Ovary (tissue), 10 donors: ENCODE measurements at regions of chr5 and their contacts with region 1.

Region 1: GRCh38 chr5:63655043-63655442 is 307.2 kb downstream of the HTR1A start:
- DNase-seq: no peak
- H3K4me3 ChIP-seq: no peak overlapping the region
- H3K27ac ChIP-seq: no peak overlapping the region
- H3K4me1 ChIP-seq: no peaks in the 10 kb centered on the region
- H3K27me3 ChIP-seq: no peaks in the 10 kb centered on the region
- CTCF ChIP-seq: no peak
- EP300 ChIP-seq: no peak
- POLR2A ChIP-seq: no peak

Region 2: GRCh38 chr5:62762503-62762902 is 892.5 kb before region 1 on chr5:
- intact Hi-C with region 1: loop called in 1 of 4 experiments (anchors 10 kb)
- DNase-seq: no peak
- H3K4me3 ChIP-seq: no peak overlapping the region
- H3K27ac ChIP-seq: no peak overlapping the region
- H3K4me1 ChIP-seq: no peaks in the 10 kb centered on the region
- H3K27me3 ChIP-seq: no peaks in the 10 kb centered on the region
- CTCF ChIP-seq: no peak
- EP300 ChIP-seq: no peak
- POLR2A ChIP-seq: no peak

Region 3: GRCh38 chr5:63686938-63687337 is 31.9 kb after region 1 on chr5:
- intact Hi-C with region 1: no loop called
- DNase-seq: peak in 2 of 5 donors; percentile 13 to 16
- H3K4me3 ChIP-seq: no peak overlapping the region
- H3K27ac ChIP-seq: no peak overlapping the region
- H3K4me1 ChIP-seq: peaks cover 3% of the 10 kb centered on the region
- H3K27me3 ChIP-seq: no peaks in the 10 kb centered on the region
- CTCF ChIP-seq: no peak
- EP300 ChIP-seq: no peak
- POLR2A ChIP-seq: no peak

Region 4: DNA sequence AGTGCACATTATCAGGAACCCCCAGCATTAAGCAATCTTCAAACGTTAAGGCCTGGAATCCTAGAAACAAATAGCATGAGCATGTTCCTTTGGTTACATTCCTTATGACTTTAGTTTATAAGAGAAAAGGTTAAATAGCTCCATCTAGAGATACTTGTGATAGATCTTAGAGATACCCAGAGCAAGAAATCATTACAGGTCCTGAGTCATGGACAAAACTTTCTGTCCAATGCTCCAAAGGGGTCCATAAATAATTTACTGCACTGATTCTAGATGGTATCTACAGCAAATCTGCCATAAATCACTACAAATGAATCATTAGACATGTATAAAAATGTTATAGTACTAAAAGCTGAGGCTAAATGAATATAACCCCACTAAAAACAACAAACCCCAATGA is 167.6 kb after region 1 on chr5:
- intact Hi-C with region 1: no loop called
- DNase-seq: no peak
- H3K4me3 ChIP-seq: no peak overlapping the region
- H3K27ac ChIP-seq: no peak overlapping the region
- H3K4me1 ChIP-seq: peaks cover 2% of the 10 kb centered on the region
- H3K27me3 ChIP-seq: no peaks in the 10 kb centered on the region
- CTCF ChIP-seq: no peak
- EP300 ChIP-seq: no peak
- POLR2A ChIP-seq: no peak